Activated naive CD4-positive, alpha-beta T cell treated with anti-CD3 and anti-CD28 coated beads for 36 hours (primary cell): ENCODE measurements at regions of chr5 and their contacts with region 1.

Region 1: DNA sequence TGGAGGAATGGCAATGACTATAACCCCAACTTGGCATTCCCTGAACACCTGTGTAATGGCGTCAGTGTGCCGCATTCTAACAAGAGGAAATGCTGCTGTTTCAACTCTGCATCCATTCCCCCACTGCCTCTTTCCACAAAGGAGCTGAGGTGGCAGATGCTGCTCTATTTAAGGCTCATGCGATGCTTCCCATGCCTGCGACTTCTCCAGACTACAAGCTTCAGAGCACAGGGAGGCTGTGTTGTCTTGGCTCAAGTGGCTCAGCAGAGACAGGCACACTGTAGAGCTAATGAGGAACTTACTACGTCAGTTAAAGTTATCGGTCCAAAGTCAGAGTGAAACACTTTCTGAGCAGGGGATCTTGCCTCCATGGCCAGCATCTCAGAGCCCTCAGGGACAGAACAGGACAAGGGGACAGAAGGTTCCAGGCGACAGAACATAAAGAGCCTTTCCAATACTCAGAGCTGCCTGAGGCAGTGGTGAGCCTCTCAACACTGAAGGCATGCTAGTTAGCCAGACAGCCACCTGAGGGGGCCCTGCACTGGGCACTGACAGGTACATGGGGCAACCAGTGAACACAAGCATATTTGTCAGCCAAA is 21.8 kb downstream of the TNIP1 start:
- DNase-seq: peak; percentile 27
- H3K4me3 Mint-ChIP-seq: peak overlapping the region; percentile 19
- H3K27ac Mint-ChIP-seq: peak overlapping the region; percentile 93
- H3K4me1 Mint-ChIP-seq: peaks cover 49% of the 10 kb centered on the region
- H3K27me3 Mint-ChIP-seq: no peaks in the 10 kb centered on the region

Region 2: GRCh38 chr5:150017226-150018005 is 1041.6 kb before region 1 on chr5:
- CTCF ChIA-PET with region 1: no interaction called
- intact Hi-C with region 1: no loop called
- DNase-seq: no peak
- H3K4me3 Mint-ChIP-seq: no peak overlapping the region
- H3K27ac Mint-ChIP-seq: no peak overlapping the region
- H3K4me1 Mint-ChIP-seq: peaks cover 15% of the 10 kb centered on the region
- H3K27me3 Mint-ChIP-seq: no peaks in the 10 kb centered on the region

Region 3: GRCh38 chr5:151094054-151094851 is 35.3 kb after region 1 on chr5:
- CTCF ChIA-PET with region 1: no interaction called
- intact Hi-C with region 1: loop called (anchors 1 kb)
- DNase-seq: peak; percentile 76
- H3K4me3 Mint-ChIP-seq: peak overlapping the region; percentile 8
- H3K27ac Mint-ChIP-seq: peak overlapping the region; percentile 86
- H3K4me1 Mint-ChIP-seq: peaks cover 68% of the 10 kb centered on the region
- H3K27me3 Mint-ChIP-seq: no peaks in the 10 kb centered on the region